GM12878 (cell line): ENCODE measurements at regions of chr9 and their contacts with region 1.

Region 1: DNA sequence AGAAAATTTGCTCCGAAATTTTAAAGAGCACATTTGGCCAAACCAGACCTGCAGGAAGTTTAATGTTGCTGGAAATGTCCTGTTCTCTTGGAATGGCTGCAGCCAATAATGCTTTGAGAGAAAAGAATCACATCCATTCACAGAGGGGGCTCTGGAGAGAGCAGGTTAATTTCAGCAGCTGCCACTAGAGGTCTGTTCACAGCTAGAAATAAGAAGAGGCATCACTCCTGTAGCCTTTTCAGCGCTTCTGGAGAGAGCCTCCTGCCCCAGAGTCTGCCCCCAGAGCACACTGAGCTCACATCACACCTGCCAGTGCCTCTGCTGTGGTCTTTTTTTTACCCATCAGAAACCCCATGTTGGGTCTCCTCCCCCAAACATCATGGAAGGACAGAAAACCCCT is 124.8 kb upstream of the RAD23B start:
- DNase-seq: no peak
- ATAC-seq: peak; percentile 99
- H3K4me3 ChIP-seq: no peak overlapping the region
- H3K27ac ChIP-seq: no peak overlapping the region
- H3K4me1 ChIP-seq: no peaks in the 10 kb centered on the region
- H3K27me3 ChIP-seq: peaks cover 0 to 3% of the 10 kb centered on the region in 2 experiments; a peak in 1 of 4 replicates
- CTCF ChIP-seq: peak; percentile 41 to 62 (median 56); a peak in 5 of 6 replicates
- EP300 ChIP-seq: no peak
- POLR2A ChIP-seq: no peak
- RAD21 ChIP-seq: peak; percentile 45

Region 2: DNA sequence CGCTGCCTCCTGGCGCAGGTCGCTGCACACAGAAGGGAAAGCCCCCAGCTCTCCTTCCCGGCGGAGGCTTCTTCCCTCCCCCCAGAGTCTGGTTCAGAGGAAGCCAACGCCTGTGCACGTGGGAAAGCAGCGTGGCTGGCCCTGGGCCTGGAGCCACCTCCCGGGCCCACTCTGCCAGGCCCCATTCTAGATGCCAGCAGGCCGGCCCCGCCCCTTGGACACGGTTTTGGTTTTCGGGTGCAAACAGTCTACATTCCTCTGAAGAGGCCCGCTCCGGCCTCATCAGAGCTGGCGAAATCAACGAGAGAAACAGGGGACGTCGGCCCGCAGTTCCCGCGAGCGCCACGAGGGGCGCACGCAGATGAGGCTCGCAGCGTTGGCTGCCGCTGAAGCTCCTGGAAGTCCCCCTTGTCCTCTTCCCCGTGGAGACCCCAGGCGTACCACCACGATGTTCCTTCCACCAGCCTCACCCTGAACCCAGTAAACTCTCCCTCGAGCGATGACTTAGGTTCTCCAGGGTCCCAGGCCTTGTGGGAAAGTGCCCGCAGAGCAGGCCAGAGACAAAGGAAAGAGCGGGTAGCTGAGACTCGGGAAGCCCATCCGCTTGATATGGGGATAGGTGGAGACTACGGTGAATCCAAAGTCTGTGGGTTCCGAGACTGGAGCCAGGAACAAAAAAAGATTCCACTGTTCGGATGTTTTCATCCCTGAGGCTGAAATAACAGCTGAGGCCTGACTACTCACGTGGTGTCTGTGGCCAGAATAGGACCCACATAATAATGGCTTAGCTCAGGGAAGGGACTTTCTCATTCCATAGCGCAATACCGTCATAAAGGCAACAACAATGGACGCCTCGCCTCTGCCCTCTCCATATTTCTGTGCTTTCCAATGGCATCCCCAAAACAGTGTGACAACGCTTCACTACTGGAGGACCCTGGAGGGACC is 267.1 kb after region 1 on chr9:
- CTCF ChIA-PET with region 1: interaction called, 14 read pairs
- POLR2A ChIA-PET with region 1: no interaction called
- RAD21 ChIA-PET with region 1: no interaction called
- SMC1A ChIA-PET with region 1: no interaction called
- in situ Hi-C with region 1: no loop called
- intact Hi-C with region 1: no loop called
- DNase-seq: no peak
- ATAC-seq: peak; percentile 90
- H3K4me3 ChIP-seq: no peak overlapping the region
- H3K27ac ChIP-seq: no peak overlapping the region
- H3K4me1 ChIP-seq: no peaks in the 10 kb centered on the region
- H3K27me3 ChIP-seq: no peaks in the 10 kb centered on the region
- CTCF ChIP-seq: peak; percentile 67 to 97 (median 95)
- EP300 ChIP-seq: no peak
- POLR2A ChIP-seq: no peak
- RAD21 ChIP-seq: no peak

Region 3: GRCh38 chr9:107438211-107439090 is 280.1 kb after region 1 on chr9:
- CTCF ChIA-PET with region 1: no interaction called
- POLR2A ChIA-PET with region 1: no interaction called
- RAD21 ChIA-PET with region 1: no interaction called
- SMC1A ChIA-PET with region 1: no interaction called
- in situ Hi-C with region 1: no loop called
- intact Hi-C with region 1: no loop called
- DNase-seq: no peak
- ATAC-seq: no peak
- H3K4me3 ChIP-seq: no peak overlapping the region
- H3K27ac ChIP-seq: no peak overlapping the region
- H3K4me1 ChIP-seq: no peaks in the 10 kb centered on the region
- H3K27me3 ChIP-seq: no peaks in the 10 kb centered on the region
- CTCF ChIP-seq: no peak
- EP300 ChIP-seq: no peak
- POLR2A ChIP-seq: no peak
- RAD21 ChIP-seq: no peak